CD14-positive monocyte (primary cell): ENCODE measurements at regions of chr2 and their contacts with region 1.

Region 1: GRCh38 chr2:190880378-190881073 is at the start of gene GLS:
- DNase-seq: peak; percentile 95 to 96 (median 95)
- H3K4me3 ChIP-seq: peak within 1 kb of the TSS; percentile 58 to 91 (median 66)
- H3K4me3 Mint-ChIP-seq: peak within 1 kb of the TSS; percentile 94 to 97
- H3K27ac ChIP-seq: peak within 1 kb of the TSS; percentile 89 to 95
- H3K27ac Mint-ChIP-seq: peak within 1 kb of the TSS; percentile 96 to 99 (median 98)
- H3K4me1 ChIP-seq: peaks cover 25 to 29% of the 10 kb centered on the region in 2 donors
- H3K4me1 Mint-ChIP-seq: peaks cover 40% of the 10 kb centered on the region
- H3K27me3 ChIP-seq: no peaks in the 10 kb centered on the region
- H3K27me3 Mint-ChIP-seq: no peaks in the 10 kb centered on the region
- CTCF ChIP-seq: no peak
- polyA plus RNA-seq, gene GLS: 6.0 to 29.5 (median 9.0) TPM

Region 2: GRCh38 chr2:191020221-191020741 is 139.8 kb after region 1 on chr2:
- intact Hi-C with region 1: loop called in 1 of 2 experiments (anchors 5 kb)
- DNase-seq: peak; percentile 97 to 98 (median 98)
- H3K4me3 ChIP-seq: peak overlapping the region; percentile 58 to 94 (median 87)
- H3K4me3 Mint-ChIP-seq: no peak overlapping the region
- H3K27ac ChIP-seq: peak overlapping the region; percentile 87 to 99
- H3K27ac Mint-ChIP-seq: no peak overlapping the region
- H3K4me1 ChIP-seq: peaks cover 26 to 41% of the 10 kb centered on the region in 2 donors
- H3K4me1 Mint-ChIP-seq: peaks cover 10% of the 10 kb centered on the region
- H3K27me3 ChIP-seq: no peaks in the 10 kb centered on the region
- H3K27me3 Mint-ChIP-seq: peaks cover 0 to 2% (median 0%) of the 10 kb centered on the region in 3 donors
- CTCF ChIP-seq: no peak

Region 3: GRCh38 chr2:191617575-191617974 is 737.0 kb after region 1 on chr2:
- intact Hi-C with region 1: loop called in 1 of 2 experiments (anchors 5 kb)
- DNase-seq: peak; percentile 48 to 86 (median 69)
- H3K4me3 ChIP-seq: peak overlapping the region in 1 of 3 experiments; percentile 16
- H3K4me3 Mint-ChIP-seq: peak overlapping the region in 1 of 2 donors; percentile 27
- H3K27ac ChIP-seq: peak overlapping the region in 1 of 2 donors; percentile 61
- H3K27ac Mint-ChIP-seq: peak overlapping the region; percentile 73 to 91 (median 84)
- H3K4me1 ChIP-seq: peaks cover 30 to 42% of the 10 kb centered on the region in 2 donors
- H3K4me1 Mint-ChIP-seq: peaks cover 36% of the 10 kb centered on the region
- H3K27me3 ChIP-seq: no peaks in the 10 kb centered on the region
- H3K27me3 Mint-ChIP-seq: peaks cover 0 to 2% (median 0%) of the 10 kb centered on the region in 3 donors
- CTCF ChIP-seq: no peak